CD8-positive, alpha-beta T cell (primary cell): ENCODE measurements at regions of chr3 and their contacts with region 1.

Region 1: GRCh38 chr3:9362731-9363530 is at the start of gene THUMPD3:
- DNase-seq: peak; percentile 82 to 94 (median 92)
- ATAC-seq: peak; percentile 92
- H3K4me3 ChIP-seq: peak within 1 kb of the TSS; percentile 79 to 97
- H3K4me3 Mint-ChIP-seq: peak within 1 kb of the TSS; percentile 96
- H3K27ac ChIP-seq: peak within 1 kb of the TSS; percentile 93 to 97
- H3K27ac Mint-ChIP-seq: peak within 1 kb of the TSS; percentile 99
- H3K4me1 ChIP-seq: peaks cover 19% of the 10 kb centered on the region
- H3K4me1 Mint-ChIP-seq: peaks cover 35% of the 10 kb centered on the region
- H3K27me3 ChIP-seq: no peaks in the 10 kb centered on the region
- H3K27me3 Mint-ChIP-seq: no peaks in the 10 kb centered on the region
- CTCF ChIP-seq: no peak
- total RNA-seq, gene THUMPD3: 84.1 to 84.3 TPM

Region 2: DNA sequence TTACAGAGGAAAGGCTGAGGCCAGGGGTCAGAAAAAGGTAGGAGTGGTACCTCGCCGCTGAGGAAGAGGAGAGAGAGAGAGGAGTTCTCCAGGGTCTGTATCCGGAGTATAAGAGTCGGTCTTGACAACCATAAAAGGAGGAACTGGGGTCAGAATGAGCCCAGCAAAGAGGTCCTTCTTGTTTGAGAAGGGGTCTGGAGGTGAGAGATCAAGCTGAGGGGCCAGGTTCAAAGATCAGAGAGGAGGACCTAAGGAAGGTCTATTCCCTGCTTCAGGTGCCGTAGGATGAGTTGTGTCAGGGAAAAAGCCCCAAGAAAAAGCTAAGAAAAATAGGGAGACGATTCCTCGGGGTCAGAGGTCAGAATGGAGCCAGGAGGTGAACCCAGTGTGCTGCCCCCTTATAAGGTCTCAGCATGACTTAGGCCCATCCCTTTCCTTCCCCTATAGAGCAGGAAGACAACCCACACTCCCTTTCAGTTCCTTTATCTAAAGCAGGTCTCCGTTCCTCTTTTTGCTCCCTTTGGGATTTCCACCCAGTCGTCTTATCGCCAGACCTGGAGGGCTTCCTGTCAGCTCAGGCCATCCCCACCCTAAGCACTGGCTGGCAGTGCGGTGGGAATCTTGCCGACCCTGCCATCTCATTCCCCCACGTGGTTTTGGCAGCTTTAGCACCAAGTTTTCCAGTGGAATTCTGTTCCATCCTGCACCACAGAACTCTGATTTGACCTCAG is 287.0 kb after region 1 on chr3:
- CTCF ChIA-PET with region 1: no interaction called
- POLR2A ChIA-PET with region 1: interaction called, 4 read pairs
- intact Hi-C with region 1: loop called (anchors 1 to 10 kb)
- DNase-seq: peak in 2 of 9 experiments; percentile 10 to 42
- ATAC-seq: no peak
- H3K4me3 ChIP-seq: peak overlapping the region; percentile 90 to 91
- H3K4me3 Mint-ChIP-seq: peak overlapping the region; percentile 93
- H3K27ac ChIP-seq: peak overlapping the region; percentile 88 to 94
- H3K27ac Mint-ChIP-seq: peak overlapping the region; percentile 97
- H3K4me1 ChIP-seq: peaks cover 27% of the 10 kb centered on the region
- H3K4me1 Mint-ChIP-seq: peaks cover 39% of the 10 kb centered on the region
- H3K27me3 ChIP-seq: no peaks in the 10 kb centered on the region
- H3K27me3 Mint-ChIP-seq: no peaks in the 10 kb centered on the region
- CTCF ChIP-seq: no peak